PC-9 (cell line): ENCODE measurements at regions of chr20 and their contacts with region 1.

Region 1: DNA sequence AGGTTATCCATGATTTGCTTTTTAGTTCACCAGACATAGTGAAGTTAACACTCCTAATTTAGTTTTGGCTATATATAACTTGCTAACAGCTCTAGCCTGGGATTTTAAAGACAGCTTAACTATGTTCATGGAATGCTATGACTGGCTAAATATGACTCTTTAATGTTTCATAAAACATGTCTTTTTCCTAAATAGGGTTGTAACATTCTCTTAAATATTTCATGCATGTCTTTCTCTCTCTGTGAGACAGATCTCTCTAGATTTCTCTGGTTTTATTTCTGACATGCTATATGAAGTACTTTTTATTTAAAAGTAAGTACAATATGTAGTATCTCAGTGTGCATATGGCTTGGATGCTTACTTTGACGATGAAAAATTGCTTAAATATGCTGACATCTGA is 35.7 kb downstream of the MACROD2 start:
- DNase-seq: no peak
- H3K4me3 ChIP-seq: no peak overlapping the region
- H3K27ac ChIP-seq: no peak overlapping the region
- H3K4me1 ChIP-seq: no peaks in the 10 kb centered on the region
- H3K27me3 ChIP-seq: no peaks in the 10 kb centered on the region
- CTCF ChIP-seq: no peak

Region 2: DNA sequence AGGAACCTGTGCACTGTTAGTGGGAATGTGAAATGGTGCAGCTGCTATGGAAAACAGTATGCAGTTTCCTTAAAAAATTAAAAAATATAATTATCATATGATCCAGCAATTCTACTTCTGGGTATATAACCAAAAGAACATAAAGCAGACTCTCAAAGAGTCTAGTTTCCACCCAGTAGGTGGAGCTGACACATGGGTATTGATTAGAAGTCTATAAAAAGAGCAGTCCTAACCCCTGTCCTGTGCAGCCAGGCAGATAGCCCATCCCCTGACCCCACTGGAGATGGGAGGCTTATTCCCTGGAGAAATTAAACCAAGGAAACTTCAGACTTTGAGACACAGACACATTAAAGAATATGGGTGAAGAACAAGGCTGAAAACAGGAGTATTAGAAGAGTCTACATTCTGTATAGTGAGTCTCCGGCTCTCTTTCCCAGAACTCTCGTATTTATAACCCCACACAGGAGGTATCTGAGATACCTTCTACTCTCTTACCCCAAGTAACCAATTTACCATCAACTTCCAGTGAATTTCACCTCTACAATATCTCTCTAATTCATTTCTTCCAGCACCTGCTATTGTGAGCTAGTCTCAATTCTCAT is 132.9 kb before region 1 on chr20:
- CTCF ChIA-PET with region 1: interaction called, 17 read pairs
- POLR2A ChIA-PET with region 1: no interaction called
- intact Hi-C with region 1: no loop called
- DNase-seq: no peak
- H3K4me3 ChIP-seq: no peak overlapping the region
- H3K27ac ChIP-seq: no peak overlapping the region
- H3K4me1 ChIP-seq: no peaks in the 10 kb centered on the region
- H3K27me3 ChIP-seq: no peaks in the 10 kb centered on the region
- CTCF ChIP-seq: peak; percentile 45

Region 3: GRCh38 chr20:13909067-13909466 is 121.9 kb before region 1 on chr20:
- CTCF ChIA-PET with region 1: no interaction called
- POLR2A ChIA-PET with region 1: no interaction called
- intact Hi-C with region 1: no loop called
- DNase-seq: no peak
- H3K4me3 ChIP-seq: no peak overlapping the region
- H3K27ac ChIP-seq: no peak overlapping the region
- H3K4me1 ChIP-seq: no peaks in the 10 kb centered on the region
- H3K27me3 ChIP-seq: no peaks in the 10 kb centered on the region
- CTCF ChIP-seq: no peak